Posterior vena cava (tissue), 2 donors: ENCODE measurements at regions of chr21 and their contacts with region 1.

Region 1: GRCh38 chr21:36141513-36141925 is 6.6 kb downstream of the CBR3 start:
- DNase-seq: peak; percentile 56

Region 2: DNA sequence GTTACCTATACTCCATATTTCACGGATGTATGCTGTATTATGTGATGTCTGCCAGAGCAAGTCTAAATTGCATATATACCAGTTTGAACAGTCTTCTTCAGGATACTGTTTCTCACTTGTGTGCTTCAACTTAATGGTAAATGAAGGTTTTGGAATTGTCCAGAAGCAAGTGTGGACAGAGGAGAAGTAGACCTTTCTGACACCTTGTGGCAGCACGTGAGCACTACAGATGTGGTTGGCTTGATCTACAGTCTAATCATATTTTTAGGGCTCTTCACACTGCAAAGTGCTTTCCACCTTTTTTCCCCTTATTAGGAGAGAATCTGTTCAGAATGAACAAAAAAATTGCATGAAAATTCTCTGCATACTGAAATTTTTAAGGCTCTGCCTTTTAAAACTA is 189.4 kb after region 1 on chr21:
- intact Hi-C with region 1: loop called in 1 of 2 experiments (anchors 5 kb)
- DNase-seq: no peak